ENCODE measurements at regions of chr4 and their contacts with region 1.

Region 1: DNA sequence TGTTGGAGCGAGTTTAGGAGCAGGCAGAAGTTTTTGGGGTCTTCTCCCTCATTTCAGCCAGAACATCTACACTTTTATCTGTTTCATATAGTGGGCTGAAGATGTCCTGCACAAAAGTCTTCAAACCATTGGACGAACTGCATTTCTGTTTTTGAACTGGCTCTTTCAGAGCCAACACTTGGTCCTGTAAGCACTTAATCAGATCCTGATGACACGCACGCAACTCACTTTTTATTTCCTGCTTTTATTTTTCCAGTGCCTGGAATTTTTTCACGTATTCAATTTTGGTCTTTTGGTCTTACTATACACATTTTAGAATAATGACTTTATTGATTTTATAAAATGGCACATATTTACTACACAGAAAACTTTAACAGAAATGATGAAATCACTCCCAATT is 40.2 kb upstream of the NKX3-2 start:
- DNase-seq: no peak
- ATAC-seq: no peak
- H3K4me3 ChIP-seq: no peak overlapping the region
- H3K4me3 Mint-ChIP-seq: no peak overlapping the region
- H3K27ac ChIP-seq: no peak overlapping the region
- H3K27ac Mint-ChIP-seq: no peak overlapping the region
- H3K4me1 ChIP-seq: no peaks in the 10 kb centered on the region
- H3K4me1 Mint-ChIP-seq: no peaks in the 10 kb centered on the region
- H3K27me3 ChIP-seq: no peaks in the 10 kb centered on the region
- H3K27me3 Mint-ChIP-seq: no peaks in the 10 kb centered on the region

Region 2: GRCh38 chr4:13611283-13611842 is 26.9 kb after region 1 on chr4:
- CTCF ChIA-PET with region 1: no interaction called
- POLR2A ChIA-PET with region 1: interaction called in 1 of 2 experiments, 12 read pairs
- DNase-seq: no peak
- ATAC-seq: no peak
- H3K4me3 ChIP-seq: no peak overlapping the region
- H3K4me3 Mint-ChIP-seq: no peak overlapping the region
- H3K27ac ChIP-seq: no peak overlapping the region
- H3K27ac Mint-ChIP-seq: no peak overlapping the region
- H3K4me1 ChIP-seq: peaks cover 0 to 2% of the 10 kb centered on the region in 2 experiments
- H3K4me1 Mint-ChIP-seq: peaks cover 12 to 23% (median 16%) of the 10 kb centered on the region in 3 donors
- H3K27me3 ChIP-seq: no peaks in the 10 kb centered on the region
- H3K27me3 Mint-ChIP-seq: no peaks in the 10 kb centered on the region